ENCODE measurements at regions of chr4 and their contacts with region 1.

Region 1: GRCh38 chr4:29636961-29637360 is 1083.2 kb upstream of the PCDH7 start:
- DNase-seq: no peak
- ATAC-seq: no peak
- H3K4me3 Mint-ChIP-seq: no peak overlapping the region
- H3K27ac Mint-ChIP-seq: no peak overlapping the region
- H3K4me1 Mint-ChIP-seq: no peaks in the 10 kb centered on the region
- H3K27me3 Mint-ChIP-seq: no peaks in the 10 kb centered on the region
- CTCF ChIP-seq: no peak

Region 2: DNA sequence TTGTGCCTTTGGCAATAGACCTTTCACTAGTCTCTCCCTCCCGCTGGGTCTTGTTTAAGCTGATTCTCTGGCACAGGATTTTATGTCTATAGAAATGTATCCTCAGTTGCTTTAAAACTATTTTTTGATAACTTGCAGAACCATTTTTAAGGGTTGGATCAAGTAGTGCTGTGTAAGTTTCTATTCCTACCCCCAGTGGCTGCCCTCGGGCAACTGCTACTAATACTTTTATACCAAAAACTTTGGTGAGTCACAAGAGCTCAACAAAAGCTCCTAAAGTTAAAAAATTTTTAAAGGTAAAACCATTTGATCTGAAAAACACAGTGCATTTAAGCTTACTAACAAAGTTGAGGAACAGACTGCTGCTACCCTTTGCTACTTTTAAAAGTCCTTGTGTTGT is 377.4 kb before region 1 on chr4:
- CTCF ChIA-PET with region 1: no interaction called
- POLR2A ChIA-PET with region 1: no interaction called
- intact Hi-C with region 1: loop called (anchors 5 kb)
- DNase-seq: no peak
- ATAC-seq: no peak
- H3K4me3 Mint-ChIP-seq: no peak overlapping the region
- H3K27ac Mint-ChIP-seq: no peak overlapping the region
- H3K4me1 Mint-ChIP-seq: no peaks in the 10 kb centered on the region
- H3K27me3 Mint-ChIP-seq: no peaks in the 10 kb centered on the region
- CTCF ChIP-seq: no peak

Region 3: DNA sequence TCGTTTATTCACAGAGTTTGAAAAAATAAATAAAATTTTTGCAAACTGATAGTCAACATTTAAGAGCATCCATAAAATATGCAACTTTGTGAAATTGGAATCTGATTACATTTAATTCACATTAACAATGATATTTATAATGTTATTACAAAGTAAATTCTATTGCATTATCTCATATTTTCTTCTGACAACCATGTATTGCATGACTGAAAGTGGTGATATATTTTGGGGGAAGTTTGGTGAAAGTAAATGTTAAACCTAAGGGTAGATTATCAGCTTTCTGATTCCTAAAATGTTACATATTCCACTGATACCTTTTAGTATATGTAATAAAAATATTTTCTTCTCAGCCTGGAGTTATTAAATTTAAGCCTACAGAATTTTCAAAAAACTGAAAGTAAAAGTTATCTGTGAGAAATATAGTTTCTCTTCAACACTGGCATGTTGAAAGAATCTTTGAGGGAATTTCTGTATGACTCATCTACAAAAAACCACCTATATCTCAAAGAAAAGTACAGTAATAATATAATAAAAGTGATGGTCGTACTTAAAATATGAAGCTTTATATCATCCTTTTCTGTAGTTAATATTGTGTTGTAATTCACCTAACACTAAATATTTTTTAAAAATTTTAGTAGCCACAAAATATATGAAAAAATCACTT is 96.4 kb before region 1 on chr4:
- CTCF ChIA-PET with region 1: no interaction called
- POLR2A ChIA-PET with region 1: no interaction called
- intact Hi-C with region 1: no loop called
- DNase-seq: no peak
- ATAC-seq: no peak
- H3K4me3 Mint-ChIP-seq: no peak overlapping the region
- H3K27ac Mint-ChIP-seq: no peak overlapping the region
- H3K4me1 Mint-ChIP-seq: no peaks in the 10 kb centered on the region
- H3K27me3 Mint-ChIP-seq: no peaks in the 10 kb centered on the region
- CTCF ChIP-seq: no peak

Region 4: GRCh38 chr4:29619168-29619567 is 17.8 kb before region 1 on chr4:
- CTCF ChIA-PET with region 1: no interaction called
- POLR2A ChIA-PET with region 1: no interaction called
- intact Hi-C with region 1: no loop called
- DNase-seq: no peak
- ATAC-seq: no peak
- H3K4me3 Mint-ChIP-seq: no peak overlapping the region
- H3K27ac Mint-ChIP-seq: no peak overlapping the region
- H3K4me1 Mint-ChIP-seq: no peaks in the 10 kb centered on the region
- H3K27me3 Mint-ChIP-seq: no peaks in the 10 kb centered on the region
- CTCF ChIP-seq: no peak